ENCODE measurements at regions of chr5 and their contacts with region 1.

Region 1: DNA sequence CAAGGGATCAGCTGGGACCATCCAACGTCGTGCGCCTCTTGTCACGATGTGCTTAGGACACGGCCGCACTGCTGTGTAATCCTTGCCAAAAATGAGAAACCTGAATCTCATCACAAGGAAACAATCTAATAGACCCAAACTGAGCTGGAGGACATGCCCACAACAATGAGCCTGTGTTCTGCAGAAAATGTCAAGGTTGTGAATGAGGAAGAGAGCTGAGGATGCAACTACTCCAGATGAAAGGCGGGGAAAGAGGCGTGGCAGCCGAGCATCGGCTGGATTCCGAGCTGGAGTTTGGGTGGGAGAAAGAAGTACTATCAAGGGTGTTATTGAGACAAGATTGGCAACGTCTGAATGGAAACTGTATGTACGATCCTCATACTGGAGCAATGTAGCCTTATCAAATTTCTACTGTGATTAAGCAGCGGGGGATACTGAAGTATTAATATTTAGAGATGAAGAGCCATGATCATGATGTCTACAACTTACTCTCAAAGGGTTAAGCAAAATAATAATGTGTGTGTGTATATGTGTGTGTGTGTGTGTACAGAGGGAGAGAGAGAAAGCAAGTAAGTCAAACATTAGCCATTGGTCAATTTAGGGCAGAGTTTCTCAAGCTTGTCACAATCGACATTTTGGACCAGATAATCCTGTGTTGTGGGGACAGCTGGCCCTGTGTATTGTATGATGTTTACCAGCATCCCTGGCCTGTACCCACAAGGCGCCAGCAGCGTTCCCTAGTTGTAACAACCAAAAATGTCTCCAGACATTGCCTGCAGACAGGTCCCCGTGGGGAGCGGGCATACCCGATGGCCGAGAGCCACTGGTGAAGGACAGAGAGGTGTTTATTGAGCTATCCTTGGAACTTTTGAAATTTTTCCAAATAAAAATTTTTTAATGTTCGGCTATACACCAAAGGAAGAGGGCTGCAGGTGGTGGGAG is 46.5 kb downstream of the DUSP1 start:
- DNase-seq: no peak
- H3K4me3 ChIP-seq: no peak overlapping the region
- H3K27ac ChIP-seq: no peak overlapping the region
- H3K4me1 ChIP-seq: peaks cover 15 to 48% of the 10 kb centered on the region in 2 donors
- H3K27me3 ChIP-seq: no peaks in the 10 kb centered on the region
- CTCF ChIP-seq: no peak
- POLR2A ChIP-seq: no peak

Region 2: GRCh38 chr5:172764849-172765765 is 40.6 kb after region 1 on chr5:
- intact Hi-C with region 1: loop called (anchors 5 kb)
- DNase-seq: peak; percentile 98 to 99
- H3K4me3 ChIP-seq: no peak overlapping the region
- H3K27ac ChIP-seq: peak overlapping the region; percentile 99 to 100 (median 100)
- H3K4me1 ChIP-seq: peaks cover 22 to 36% of the 10 kb centered on the region in 2 donors
- H3K27me3 ChIP-seq: no peaks in the 10 kb centered on the region
- CTCF ChIP-seq: peak in 3 of 6 experiments; percentile 10 to 33 (median 14)
- POLR2A ChIP-seq: peak in 1 of 2 donors; percentile 88

Region 3: GRCh38 chr5:172777881-172778814 is 53.6 kb after region 1 on chr5:
- intact Hi-C with region 1: no loop called
- DNase-seq: no peak
- H3K4me3 ChIP-seq: no peak overlapping the region
- H3K27ac ChIP-seq: peak overlapping the region; percentile 59 to 70 (median 70)
- H3K4me1 ChIP-seq: peaks cover 0 to 31% of the 10 kb centered on the region in 2 donors
- H3K27me3 ChIP-seq: no peaks in the 10 kb centered on the region
- CTCF ChIP-seq: no peak
- POLR2A ChIP-seq: no peak

Measured in thyroid gland (tissue), 4 donors.